Activated naive CD4-positive, alpha-beta T cell treated with anti-CD3 and anti-CD28 coated beads for 36 hours (primary cell): ENCODE measurements at regions of chr12 and their contacts with region 1.

Region 1: GRCh38 chr12:31989571-31990362 is 30.6 kb downstream of the RESF1 start:
- DNase-seq: no peak
- H3K4me3 Mint-ChIP-seq: no peak overlapping the region
- H3K27ac Mint-ChIP-seq: peak overlapping the region; percentile 87
- H3K4me1 Mint-ChIP-seq: peaks cover 55% of the 10 kb centered on the region
- H3K27me3 Mint-ChIP-seq: no peaks in the 10 kb centered on the region

Region 2: GRCh38 chr12:31412292-31412801 is 577.4 kb before region 1 on chr12:
- CTCF ChIA-PET with region 1: no interaction called
- intact Hi-C with region 1: no loop called
- DNase-seq: no peak
- H3K4me3 Mint-ChIP-seq: no peak overlapping the region
- H3K27ac Mint-ChIP-seq: no peak overlapping the region
- H3K4me1 Mint-ChIP-seq: no peaks in the 10 kb centered on the region
- H3K27me3 Mint-ChIP-seq: no peaks in the 10 kb centered on the region

Region 3: DNA sequence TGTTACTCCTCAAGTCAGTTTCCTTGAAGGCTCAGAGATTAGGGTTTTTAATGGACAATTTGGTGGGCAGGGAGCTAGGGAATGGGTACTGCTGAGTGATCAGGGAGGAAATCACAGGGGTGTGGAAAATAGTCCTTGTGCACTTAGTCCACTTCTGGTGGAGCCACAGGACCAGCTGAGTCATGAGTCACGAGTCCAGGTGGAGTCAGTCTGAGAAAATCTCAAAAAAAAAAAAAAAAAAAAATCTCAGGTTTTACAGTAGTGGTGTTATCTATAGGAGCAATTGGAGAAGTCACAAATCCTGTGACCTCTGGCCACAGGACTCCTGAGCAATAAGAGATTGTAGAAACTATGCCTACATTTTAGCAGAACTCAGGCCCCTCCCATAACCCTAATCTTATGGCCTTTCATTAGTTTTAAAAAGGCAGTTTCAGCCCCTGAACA is 232.8 kb before region 1 on chr12:
- CTCF ChIA-PET with region 1: no interaction called
- intact Hi-C with region 1: no loop called
- DNase-seq: no peak
- H3K4me3 Mint-ChIP-seq: no peak overlapping the region
- H3K27ac Mint-ChIP-seq: no peak overlapping the region
- H3K4me1 Mint-ChIP-seq: peaks cover 18% of the 10 kb centered on the region
- H3K27me3 Mint-ChIP-seq: no peaks in the 10 kb centered on the region

Region 4: GRCh38 chr12:31951008-31951407 is 38.8 kb before region 1 on chr12:
- CTCF ChIA-PET with region 1: no interaction called
- intact Hi-C with region 1: loop called (anchors 1 kb)
- DNase-seq: peak; percentile 63
- H3K4me3 Mint-ChIP-seq: no peak overlapping the region
- H3K27ac Mint-ChIP-seq: peak overlapping the region; percentile 68
- H3K4me1 Mint-ChIP-seq: peaks cover 39% of the 10 kb centered on the region
- H3K27me3 Mint-ChIP-seq: no peaks in the 10 kb centered on the region

Region 5: GRCh38 chr12:31966558-31967205 is 23.1 kb before region 1 on chr12:
- CTCF ChIA-PET with region 1: interaction called, 5 read pairs
- intact Hi-C with region 1: loop called (anchors 1 kb)
- DNase-seq: peak; percentile 41
- H3K4me3 Mint-ChIP-seq: peak overlapping the region; percentile 55
- H3K27ac Mint-ChIP-seq: peak overlapping the region; percentile 99
- H3K4me1 Mint-ChIP-seq: peaks cover 76% of the 10 kb centered on the region
- H3K27me3 Mint-ChIP-seq: no peaks in the 10 kb centered on the region

Region 6: DNA sequence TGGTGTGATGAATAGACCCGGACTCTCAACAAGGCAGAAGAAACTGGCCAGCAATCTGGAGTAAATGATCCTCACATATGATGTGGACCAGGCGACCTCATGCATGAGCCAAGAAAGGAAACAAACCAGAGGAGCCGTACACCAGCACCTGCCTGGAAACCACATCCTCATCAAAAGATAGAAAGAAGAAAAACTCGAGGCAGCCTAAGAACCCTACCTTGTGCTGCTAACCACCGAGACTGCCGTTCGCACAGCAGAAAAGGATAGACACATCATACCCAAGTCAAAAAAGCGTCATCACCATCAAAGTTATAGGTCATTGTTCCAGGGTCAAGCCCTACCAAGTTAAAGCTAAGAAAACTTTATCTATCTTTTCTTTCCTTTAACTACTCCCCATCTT is 36.1 kb after region 1 on chr12:
- CTCF ChIA-PET with region 1: interaction called, 4 read pairs
- intact Hi-C with region 1: loop called (anchors 1 kb)
- DNase-seq: peak; percentile 84
- H3K4me3 Mint-ChIP-seq: no peak overlapping the region
- H3K27ac Mint-ChIP-seq: peak overlapping the region; percentile 81
- H3K4me1 Mint-ChIP-seq: peaks cover 24% of the 10 kb centered on the region
- H3K27me3 Mint-ChIP-seq: no peaks in the 10 kb centered on the region